Activated T-helper 2 cell treated with anti-CD3 and anti-CD28 coated beads, Interferon-gamma antibody, Interleukin-2, Interleukin-4, amounts not matched to agents 10 μg/mL and 5 μg/mL and 100 μg/mL, durations not matched to agents 14 hours and 24 hours and 36 hours (primary cell): ENCODE measurements at regions of chr21 and their contacts with region 1.

Region 1: GRCh38 chr21:14864211-14865021 is 200.4 kb downstream of the NRIP1 start:
- DNase-seq: peak; percentile 19
- H3K4me3 Mint-ChIP-seq: no peak overlapping the region
- H3K27ac Mint-ChIP-seq: no peak overlapping the region
- H3K4me1 Mint-ChIP-seq: peaks cover 6% of the 10 kb centered on the region
- H3K27me3 Mint-ChIP-seq: peaks cover 10% of the 10 kb centered on the region

Region 2: GRCh38 chr21:14403681-14404318 is 460.6 kb before region 1 on chr21:
- intact Hi-C with region 1: loop called (anchors 1 kb)
- DNase-seq: no peak
- H3K4me3 Mint-ChIP-seq: no peak overlapping the region
- H3K27ac Mint-ChIP-seq: no peak overlapping the region
- H3K4me1 Mint-ChIP-seq: peaks cover 1% of the 10 kb centered on the region
- H3K27me3 Mint-ChIP-seq: peaks cover 4% of the 10 kb centered on the region

Region 3: GRCh38 chr21:15015622-15016471 is 151.4 kb after region 1 on chr21:
- intact Hi-C with region 1: no loop called
- DNase-seq: no peak
- H3K4me3 Mint-ChIP-seq: no peak overlapping the region
- H3K27ac Mint-ChIP-seq: no peak overlapping the region
- H3K4me1 Mint-ChIP-seq: peaks cover 7% of the 10 kb centered on the region
- H3K27me3 Mint-ChIP-seq: no peaks in the 10 kb centered on the region

Region 4: DNA sequence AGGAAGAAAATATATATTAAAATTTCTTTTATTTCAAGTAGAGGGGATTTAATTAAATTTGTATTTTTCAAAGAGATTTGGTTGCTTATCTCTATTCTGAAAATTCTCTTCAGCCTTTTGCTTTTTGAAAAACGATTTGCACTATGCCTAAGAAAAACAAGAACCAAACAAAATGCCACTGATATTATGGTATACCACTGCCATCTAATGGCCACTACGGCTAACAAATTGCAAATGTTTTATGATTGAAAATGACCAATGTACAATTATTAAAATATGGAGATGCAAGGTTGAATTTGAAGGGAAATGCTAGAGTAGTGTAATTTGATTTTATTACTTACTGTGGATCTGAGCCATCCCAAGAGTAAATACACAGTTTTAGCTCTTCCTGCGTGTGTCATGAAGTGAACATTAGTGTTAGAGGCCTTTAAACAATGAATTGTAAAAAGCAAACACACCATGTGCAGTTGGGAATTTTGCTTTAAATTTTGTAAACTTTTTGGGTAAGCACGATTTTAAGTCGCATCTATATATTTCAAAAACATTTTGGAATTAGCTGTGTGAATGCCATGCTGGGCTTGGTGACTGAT is 728.0 kb after region 1 on chr21:
- intact Hi-C with region 1: loop called (anchors 5 kb)
- DNase-seq: no peak
- H3K4me3 Mint-ChIP-seq: no peak overlapping the region
- H3K27ac Mint-ChIP-seq: no peak overlapping the region
- H3K4me1 Mint-ChIP-seq: no peaks in the 10 kb centered on the region
- H3K27me3 Mint-ChIP-seq: peaks cover 12% of the 10 kb centered on the region